Breast epithelium (tissue), 4 donors: ENCODE measurements at regions of chr10 and their contacts with region 1.

Region 1: DNA sequence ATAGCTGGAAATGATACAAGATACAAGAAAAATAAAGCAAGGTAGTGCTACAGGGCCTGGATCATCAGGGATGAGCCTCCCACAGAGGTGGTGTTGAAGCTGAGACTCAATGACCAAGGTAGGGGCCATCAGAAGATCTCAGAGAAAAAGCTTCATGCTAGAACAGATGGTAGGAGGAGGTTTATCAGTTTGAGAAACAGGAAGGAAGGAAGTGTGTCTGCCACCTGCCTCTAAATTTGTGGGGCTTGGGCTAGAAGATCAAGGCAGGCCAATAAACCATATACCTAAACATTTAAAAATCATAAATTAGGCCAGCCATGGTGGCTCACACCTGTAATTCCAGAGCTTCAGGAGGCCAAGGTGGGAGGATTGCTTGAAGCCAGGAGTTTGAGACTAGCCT is 410.8 kb upstream of the PRKCQ start:
- DNase-seq: no peak
- H3K4me3 ChIP-seq: no peak overlapping the region
- H3K27ac ChIP-seq: no peak overlapping the region
- H3K4me1 ChIP-seq: no peaks in the 10 kb centered on the region
- H3K27me3 ChIP-seq: no peaks in the 10 kb centered on the region
- CTCF ChIP-seq: no peak
- POLR2A ChIP-seq: no peak

Region 2: DNA sequence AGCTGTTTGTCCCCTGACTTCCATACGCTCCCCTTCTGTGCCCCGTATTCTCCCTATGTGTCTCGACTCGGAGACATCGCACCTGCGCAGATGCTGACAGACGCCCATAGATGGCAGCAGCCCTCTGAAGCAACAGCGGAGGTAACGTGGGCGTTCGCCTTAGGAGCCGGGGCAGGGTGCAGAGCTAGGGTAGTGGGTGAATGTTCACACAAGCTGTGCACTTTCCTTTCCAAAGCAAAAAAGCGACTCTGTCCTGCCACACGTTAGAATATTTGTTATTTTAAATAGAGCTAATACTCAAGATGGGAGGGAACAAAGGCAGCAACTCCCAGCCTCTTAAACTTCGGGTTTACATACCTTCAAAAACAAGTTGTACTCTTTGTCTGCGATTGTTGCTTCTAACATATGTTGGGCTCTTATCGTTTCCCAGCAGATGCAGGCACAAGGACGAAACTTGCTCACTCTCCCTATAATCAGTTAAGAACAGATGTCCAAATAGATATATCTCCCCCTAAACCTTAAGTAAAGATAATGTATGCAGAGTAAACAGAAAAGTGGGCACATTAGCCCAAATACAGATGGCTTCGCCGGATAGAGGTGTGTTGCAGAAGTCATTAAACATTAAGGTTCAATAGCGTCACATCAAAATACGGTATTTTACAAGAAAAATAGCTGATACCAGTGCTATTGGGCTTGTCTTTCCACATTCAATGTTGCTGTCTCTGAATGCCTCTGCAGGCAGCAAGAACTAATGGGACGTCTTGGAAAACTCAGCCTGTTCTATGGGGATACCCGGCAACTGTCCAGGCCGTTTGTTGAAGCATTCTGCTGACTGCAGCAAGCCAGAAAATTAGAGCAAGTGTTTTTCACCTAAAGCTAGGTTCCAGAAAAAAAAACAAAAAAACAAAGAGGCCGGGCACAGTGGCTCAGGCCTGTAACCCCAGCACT is 70.5 kb before region 1 on chr10:
- intact Hi-C with region 1: no loop called
- DNase-seq: peak; percentile 57 to 73
- H3K4me3 ChIP-seq: peak overlapping the region in 2 of 3 donors; percentile 19 to 35
- H3K27ac ChIP-seq: no peak overlapping the region
- H3K4me1 ChIP-seq: peaks cover 0 to 8% of the 10 kb centered on the region in 2 donors
- H3K27me3 ChIP-seq: no peaks in the 10 kb centered on the region
- CTCF ChIP-seq: peak in 2 of 3 donors; percentile 54 to 56
- POLR2A ChIP-seq: no peak

Region 3: GRCh38 chr10:6964543-6964942 is 26.3 kb before region 1 on chr10:
- intact Hi-C with region 1: loop called (anchors 1 kb)
- DNase-seq: no peak
- H3K4me3 ChIP-seq: no peak overlapping the region
- H3K27ac ChIP-seq: no peak overlapping the region
- H3K4me1 ChIP-seq: no peaks in the 10 kb centered on the region
- H3K27me3 ChIP-seq: no peaks in the 10 kb centered on the region
- CTCF ChIP-seq: no peak
- POLR2A ChIP-seq: no peak

Region 4: GRCh38 chr10:7015457-7015856 is 24.6 kb after region 1 on chr10:
- intact Hi-C with region 1: no loop called
- DNase-seq: no peak
- H3K4me3 ChIP-seq: no peak overlapping the region
- H3K27ac ChIP-seq: no peak overlapping the region
- H3K4me1 ChIP-seq: no peaks in the 10 kb centered on the region
- H3K27me3 ChIP-seq: no peaks in the 10 kb centered on the region
- CTCF ChIP-seq: no peak
- POLR2A ChIP-seq: no peak